ENCODE measurements at regions of chr7 and their contacts with region 1.

Region 1: DNA sequence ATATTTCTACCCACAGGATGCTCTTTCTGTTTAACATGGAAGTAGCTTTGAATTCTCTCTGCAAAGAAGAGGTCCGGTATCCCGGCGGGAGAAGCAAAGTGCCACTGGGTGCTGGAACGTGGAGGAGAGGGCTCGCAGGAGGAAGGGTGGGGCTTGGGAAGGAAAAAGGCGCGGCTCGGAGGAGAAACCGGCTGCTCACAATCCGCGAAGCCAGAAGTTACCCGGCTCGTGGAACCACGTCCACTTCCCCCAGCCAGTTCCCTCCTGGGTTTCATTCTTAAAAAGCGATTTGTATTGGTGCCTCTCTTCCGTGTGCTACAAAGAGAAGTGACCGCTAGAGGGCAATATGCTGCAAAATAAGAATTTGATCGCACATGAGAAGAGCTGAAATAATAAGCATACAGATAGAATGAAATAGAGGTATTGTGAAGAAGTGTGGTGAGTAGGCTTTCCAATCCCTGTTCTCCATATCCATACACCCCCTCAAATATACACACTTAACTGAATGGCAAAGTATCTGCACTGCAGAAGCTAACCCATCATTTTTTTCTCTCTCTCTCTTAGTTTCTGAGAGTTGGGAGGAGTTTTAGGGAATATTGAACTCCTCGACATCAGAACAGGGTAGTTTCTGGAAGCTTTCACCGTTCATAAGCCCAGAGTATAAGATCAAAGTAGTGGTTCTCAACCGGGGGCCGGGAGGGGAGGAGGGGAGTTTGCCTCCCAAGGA is 31.1 kb downstream of the TRIL start:
- DNase-seq: peak; percentile 59 to 63
- ATAC-seq: peak; percentile 90

Region 2: GRCh38 chr7:29105752-29106668 is 179.0 kb after region 1 on chr7:
- intact Hi-C with region 1: loop called (anchors 2 to 10 kb)
- DNase-seq: peak in 1 of 2 donors; percentile 18
- ATAC-seq: peak; percentile 89

Region 3: DNA sequence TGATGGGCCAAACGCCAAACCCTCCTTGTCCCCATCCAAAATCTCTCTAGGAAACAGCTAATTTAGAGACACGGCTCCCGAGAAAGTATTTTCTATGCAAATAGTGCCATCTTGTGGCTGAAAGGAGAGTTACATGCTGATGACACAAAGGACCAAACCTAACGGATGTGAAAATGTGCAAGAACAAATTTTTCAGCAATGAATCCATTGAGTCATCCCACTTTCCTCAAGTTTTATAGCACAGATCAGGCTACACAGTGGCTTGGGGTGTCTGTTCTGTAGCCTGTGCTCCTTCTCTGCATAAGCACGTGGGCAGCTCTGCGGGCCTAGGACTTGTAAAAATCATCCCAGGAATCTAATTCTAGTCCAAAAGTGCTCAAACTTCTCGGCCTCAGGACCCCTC is 481.8 kb after region 1 on chr7:
- intact Hi-C with region 1: loop called in 1 of 2 experiments (anchors 5 kb)
- DNase-seq: peak in 1 of 2 donors; percentile 41
- ATAC-seq: peak; percentile 53

Measured in left colon (tissue), 2 donors.